ENCODE measurements at regions of chr2 and their contacts with region 1.

Region 1: DNA sequence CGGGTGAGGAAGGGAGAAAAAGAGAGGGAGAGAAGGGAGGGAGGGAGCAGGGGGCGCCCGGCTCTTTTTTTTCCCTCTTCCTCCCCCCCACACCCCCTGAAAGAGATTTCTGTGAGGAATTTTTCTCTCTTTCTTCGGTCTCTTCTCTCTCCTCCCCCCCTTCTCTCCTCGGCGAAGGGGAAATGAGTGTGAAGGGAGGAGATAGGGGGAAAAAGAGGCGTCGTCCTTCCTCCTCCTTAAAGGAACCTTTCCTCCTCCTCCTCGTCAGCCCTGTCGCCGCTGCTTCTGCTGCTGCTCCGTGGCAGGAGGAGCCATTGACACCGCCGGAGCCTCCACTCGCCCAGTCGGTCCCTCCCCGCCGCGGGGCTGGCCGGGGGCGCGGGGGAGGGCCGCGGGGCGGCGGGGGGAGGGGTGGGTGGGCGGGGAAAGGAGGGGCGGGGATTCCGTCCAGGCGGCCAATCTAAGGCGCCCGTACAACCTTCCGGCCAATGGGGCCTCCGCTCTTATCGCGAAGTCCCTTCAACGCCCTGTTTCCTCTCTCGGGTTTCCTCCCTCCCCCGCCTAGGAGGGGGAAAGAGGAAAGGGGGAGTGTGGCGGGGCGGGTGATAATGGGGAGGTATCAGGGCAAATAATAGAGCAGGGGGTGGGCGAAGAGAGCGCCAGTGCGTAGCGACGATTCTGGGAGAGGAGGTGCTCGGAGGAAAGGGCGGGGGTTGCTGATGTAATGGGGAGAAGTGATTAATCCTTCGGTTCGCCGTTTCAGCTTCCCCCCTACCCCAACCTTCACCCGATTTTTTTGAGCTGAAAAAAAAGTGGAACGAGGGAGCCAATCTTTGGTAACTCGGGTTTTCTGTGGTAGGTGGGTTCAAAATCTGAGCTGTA is at the start of gene FBXO11:
- DNase-seq: peak; percentile 95
- H3K4me3 Mint-ChIP-seq: peak within 1 kb of the TSS; percentile 80
- H3K27ac Mint-ChIP-seq: peak within 1 kb of the TSS; percentile 94
- H3K4me1 Mint-ChIP-seq: peaks cover 44% of the 10 kb centered on the region
- H3K27me3 Mint-ChIP-seq: no peaks in the 10 kb centered on the region
- total RNA-seq, gene FBXO11: 57.9 and 58.6 TPM in 2 replicates

Region 2: GRCh38 chr2:47782671-47783485 is 123.5 kb before region 1 on chr2 and contains the start of gene MSH6:
- intact Hi-C with region 1: loop called (anchors 1 kb)
- DNase-seq: peak; percentile 87
- H3K4me3 Mint-ChIP-seq: peak within 1 kb of the TSS; percentile 88
- H3K27ac Mint-ChIP-seq: peak within 1 kb of the TSS; percentile 82
- H3K4me1 Mint-ChIP-seq: peaks cover 9% of the 10 kb centered on the region
- H3K27me3 Mint-ChIP-seq: no peaks in the 10 kb centered on the region
- total RNA-seq, gene MSH6: 119 and 132 TPM in 2 replicates

Region 3: GRCh38 chr2:47992671-47993070 is 86.3 kb after region 1 on chr2:
- intact Hi-C with region 1: loop called (anchors 5 kb)
- DNase-seq: no peak
- H3K4me3 Mint-ChIP-seq: no peak overlapping the region
- H3K27ac Mint-ChIP-seq: no peak overlapping the region
- H3K4me1 Mint-ChIP-seq: peaks cover 5% of the 10 kb centered on the region
- H3K27me3 Mint-ChIP-seq: peaks cover 3% of the 10 kb centered on the region

Region 4: GRCh38 chr2:48356701-48357325 is 450.4 kb after region 1 on chr2:
- intact Hi-C with region 1: loop called (anchors 5 kb)
- DNase-seq: peak; percentile 25
- H3K4me3 Mint-ChIP-seq: peak overlapping the region; percentile 74
- H3K27ac Mint-ChIP-seq: peak overlapping the region; percentile 98
- H3K4me1 Mint-ChIP-seq: peaks cover 53% of the 10 kb centered on the region
- H3K27me3 Mint-ChIP-seq: no peaks in the 10 kb centered on the region

Region 5: GRCh38 chr2:48448274-48449061 is 542.1 kb after region 1 on chr2:
- intact Hi-C with region 1: loop called (anchors 2 kb)
- DNase-seq: no peak
- H3K4me3 Mint-ChIP-seq: peak overlapping the region; percentile 70
- H3K27ac Mint-ChIP-seq: peak overlapping the region; percentile 97
- H3K4me1 Mint-ChIP-seq: peaks cover 56% of the 10 kb centered on the region
- H3K27me3 Mint-ChIP-seq: no peaks in the 10 kb centered on the region

Region 6: GRCh38 chr2:48760826-48761225 is 854.4 kb after region 1 on chr2:
- intact Hi-C with region 1: no loop called
- DNase-seq: no peak
- H3K4me3 Mint-ChIP-seq: no peak overlapping the region
- H3K27ac Mint-ChIP-seq: no peak overlapping the region
- H3K4me1 Mint-ChIP-seq: no peaks in the 10 kb centered on the region
- H3K27me3 Mint-ChIP-seq: peaks cover 12% of the 10 kb centered on the region